Naive thymus-derived CD4-positive, alpha-beta T cell (primary cell): ENCODE measurements at regions of chr3 and their contacts with region 1.

Region 1: GRCh38 chr3:143972505-143973255 is 1.1 kb downstream of the DIPK2A start:
- DNase-seq: peak in 8 of 9 donors; percentile 29 to 78 (median 61)
- ATAC-seq: peak; percentile 14
- H3K4me3 ChIP-seq: peak overlapping the region; percentile 61
- H3K4me3 Mint-ChIP-seq: peak overlapping the region; percentile 91 to 100 (median 97)
- H3K27ac ChIP-seq: peak overlapping the region; percentile 84
- H3K27ac Mint-ChIP-seq: peak overlapping the region; percentile 87 to 99 (median 97)
- H3K4me1 ChIP-seq: peaks cover 10 to 14% of the 10 kb centered on the region in 2 donors
- H3K4me1 Mint-ChIP-seq: peaks cover 25 to 46% (median 33%) of the 10 kb centered on the region in 7 donors
- H3K27me3 ChIP-seq: no peaks in the 10 kb centered on the region
- H3K27me3 Mint-ChIP-seq: peaks cover 0 to 22% (median 0%) of the 10 kb centered on the region in 5 donors

Region 2: DNA sequence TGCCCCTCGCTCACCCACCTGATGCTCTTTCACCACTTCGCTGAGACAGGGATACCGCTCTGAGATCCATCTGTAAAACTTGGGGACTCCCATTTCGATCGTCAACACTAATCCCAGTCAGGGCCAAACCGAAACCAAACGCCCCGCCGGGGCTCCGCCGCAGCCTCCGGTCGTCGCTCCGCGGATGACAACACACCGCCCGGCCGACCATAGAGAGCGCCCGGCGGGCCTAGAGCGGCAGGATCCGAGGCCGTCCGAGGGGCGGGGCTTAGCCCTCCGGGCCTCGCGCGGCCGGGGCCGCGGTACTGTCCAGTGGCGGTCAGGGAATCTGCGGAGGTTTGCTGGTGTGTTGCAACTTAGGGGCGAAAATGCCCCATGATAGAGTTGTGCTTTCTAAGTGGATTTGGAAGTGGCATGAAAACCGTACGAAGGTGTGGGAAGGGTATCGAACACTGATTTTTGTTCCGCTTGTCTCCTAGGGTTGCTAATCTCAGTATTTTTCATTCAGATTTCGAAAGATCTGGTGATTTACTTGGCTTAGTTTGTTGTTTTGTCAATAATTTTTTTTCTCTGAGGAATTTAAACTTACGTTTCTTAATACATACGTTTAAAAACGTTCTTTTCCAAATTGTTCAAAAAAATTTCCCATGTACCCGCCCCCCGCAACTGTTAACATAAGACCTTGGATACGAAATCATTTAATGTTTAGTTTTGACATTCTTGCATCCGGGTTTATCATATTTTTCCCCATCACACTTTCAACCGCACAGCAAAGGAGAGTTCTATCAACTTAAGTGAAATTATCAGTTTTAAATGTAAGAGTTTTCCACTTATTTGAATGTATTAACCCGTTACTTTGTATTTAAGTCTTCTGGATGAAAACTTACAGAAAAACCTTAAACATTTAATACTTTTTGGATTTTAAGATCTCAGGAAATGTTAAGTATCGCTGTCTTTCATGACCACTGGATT is 1524.5 kb before region 1 on chr3 and contains the start of gene XRN1:
- CTCF ChIA-PET with region 1: no interaction called
- POLR2A ChIA-PET with region 1: no interaction called
- intact Hi-C with region 1: loop called (anchors 2 kb)
- DNase-seq: peak; percentile 90 to 97 (median 94)
- ATAC-seq: peak; percentile 99
- H3K4me3 ChIP-seq: peak within 1 kb of the TSS; percentile 78
- H3K4me3 Mint-ChIP-seq: peak within 1 kb of the TSS; percentile 89 to 100 (median 98)
- H3K27ac ChIP-seq: peak within 1 kb of the TSS; percentile 99
- H3K27ac Mint-ChIP-seq: peak within 1 kb of the TSS; percentile 98 to 100 (median 99)
- H3K4me1 ChIP-seq: peaks cover 31% of the 10 kb centered on the region in 2 donors
- H3K4me1 Mint-ChIP-seq: peaks cover 26 to 55% (median 51%) of the 10 kb centered on the region in 7 donors
- H3K27me3 ChIP-seq: no peaks in the 10 kb centered on the region
- H3K27me3 Mint-ChIP-seq: no peaks in the 10 kb centered on the region
- total RNA-seq, gene XRN1: 86.1 to 123 (median 103) TPM

Region 3: GRCh38 chr3:142723968-142724681 is 1248.6 kb before region 1 on chr3 and contains the start of gene TRPC1:
- CTCF ChIA-PET with region 1: no interaction called
- POLR2A ChIA-PET with region 1: interaction called, 5 read pairs
- intact Hi-C with region 1: loop called (anchors 1 to 5 kb)
- DNase-seq: peak in 8 of 9 donors; percentile 58 to 83 (median 78)
- ATAC-seq: peak; percentile 97
- H3K4me3 ChIP-seq: peak within 1 kb of the TSS; percentile 76
- H3K4me3 Mint-ChIP-seq: peak within 1 kb of the TSS; percentile 80 to 92 (median 88)
- H3K27ac ChIP-seq: peak within 1 kb of the TSS; percentile 76
- H3K27ac Mint-ChIP-seq: peak within 1 kb of the TSS; percentile 31 to 94 (median 88)
- H3K4me1 ChIP-seq: peaks cover 0 to 4% of the 10 kb centered on the region in 2 donors
- H3K4me1 Mint-ChIP-seq: peaks cover 5 to 20% (median 11%) of the 10 kb centered on the region in 7 donors
- H3K27me3 ChIP-seq: peaks cover 0 to 2% of the 10 kb centered on the region in 2 donors
- H3K27me3 Mint-ChIP-seq: peaks cover 20 to 67% (median 22%) of the 10 kb centered on the region in 5 donors
- total RNA-seq, gene TRPC1: 1.5 to 7.6 (median 5.3) TPM

Region 4: DNA sequence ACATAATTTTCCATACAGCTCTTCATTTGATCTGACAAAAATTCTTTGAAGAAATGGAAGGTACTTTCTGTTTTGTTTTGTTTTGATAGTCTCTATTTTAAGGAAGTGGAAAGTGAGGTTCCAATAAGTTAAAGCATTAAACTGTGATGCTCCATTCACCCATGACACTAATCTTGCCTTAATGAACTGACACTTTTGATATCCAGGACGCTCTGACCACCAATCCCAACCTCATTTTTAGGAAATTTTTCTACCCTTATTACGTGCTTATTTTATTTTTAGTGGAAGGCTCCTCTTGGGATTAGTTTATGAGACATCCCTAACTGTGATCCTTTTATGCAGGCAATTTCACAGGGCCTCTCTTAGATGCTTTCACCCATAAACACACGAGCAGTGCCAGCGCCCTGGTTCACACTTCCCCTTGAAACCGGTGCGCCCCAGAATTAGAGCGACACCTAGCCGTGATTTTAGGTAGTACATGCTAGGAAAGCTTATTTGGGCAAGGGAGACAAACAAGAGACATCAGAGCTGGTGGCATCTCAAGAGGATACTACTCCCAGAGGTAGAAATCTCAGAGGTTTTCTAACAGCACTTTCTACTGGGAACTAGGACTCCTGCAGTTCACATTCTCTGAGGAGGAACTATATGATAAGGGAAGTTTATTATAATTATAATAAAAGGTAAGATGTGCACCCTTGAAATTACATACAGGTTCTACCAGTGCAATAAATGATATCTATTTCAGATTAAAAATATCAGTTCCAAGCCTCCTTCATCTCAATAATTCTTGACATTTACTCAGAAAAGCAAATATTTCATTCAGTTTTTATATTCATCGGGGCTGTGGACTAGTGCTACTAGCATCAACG is 298.3 kb before region 1 on chr3:
- CTCF ChIA-PET with region 1: no interaction called
- POLR2A ChIA-PET with region 1: no interaction called
- intact Hi-C with region 1: loop called in 1 of 2 experiments (anchors 1 kb)
- DNase-seq: peak; percentile 40 to 86 (median 73)
- ATAC-seq: peak; percentile 96
- H3K4me3 ChIP-seq: no peak overlapping the region
- H3K4me3 Mint-ChIP-seq: peak overlapping the region in 9 of 10 donors; percentile 7 to 73 (median 45)
- H3K27ac ChIP-seq: no peak overlapping the region
- H3K27ac Mint-ChIP-seq: peak overlapping the region in 6 of 9 donors; percentile 14 to 86 (median 57)
- H3K4me1 ChIP-seq: peaks cover 0 to 6% of the 10 kb centered on the region in 2 donors
- H3K4me1 Mint-ChIP-seq: peaks cover 7 to 17% (median 9%) of the 10 kb centered on the region in 7 donors
- H3K27me3 ChIP-seq: no peaks in the 10 kb centered on the region
- H3K27me3 Mint-ChIP-seq: no peaks in the 10 kb centered on the region

Region 5: DNA sequence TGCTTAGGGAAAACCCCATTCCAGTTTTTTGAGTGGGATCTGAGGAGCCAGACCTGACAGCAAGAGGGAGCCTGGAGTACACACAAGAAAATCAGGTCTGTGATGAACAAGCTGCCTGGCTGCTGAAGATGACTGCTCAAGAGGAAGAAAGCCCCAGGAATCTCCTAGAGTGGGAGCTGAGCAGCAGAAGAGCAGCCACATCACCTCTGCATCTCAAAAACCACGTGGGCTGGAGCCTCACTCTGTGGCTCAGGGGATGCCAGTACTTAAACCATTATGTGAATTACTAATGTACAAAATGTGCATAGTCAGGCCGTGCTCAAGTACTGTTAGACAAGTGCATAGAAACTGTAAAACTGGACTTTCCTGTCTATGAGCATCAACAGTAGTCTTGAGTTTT is 176.8 kb before region 1 on chr3:
- CTCF ChIA-PET with region 1: no interaction called
- POLR2A ChIA-PET with region 1: no interaction called
- intact Hi-C with region 1: no loop called
- DNase-seq: no peak
- ATAC-seq: no peak
- H3K4me3 ChIP-seq: no peak overlapping the region
- H3K4me3 Mint-ChIP-seq: no peak overlapping the region
- H3K27ac ChIP-seq: no peak overlapping the region
- H3K27ac Mint-ChIP-seq: no peak overlapping the region
- H3K4me1 ChIP-seq: no peaks in the 10 kb centered on the region
- H3K4me1 Mint-ChIP-seq: peaks cover 0 to 14% (median 0%) of the 10 kb centered on the region in 7 donors
- H3K27me3 ChIP-seq: no peaks in the 10 kb centered on the region
- H3K27me3 Mint-ChIP-seq: no peaks in the 10 kb centered on the region

Region 6: GRCh38 chr3:143825513-143825912 is 147.2 kb before region 1 on chr3:
- CTCF ChIA-PET with region 1: no interaction called
- POLR2A ChIA-PET with region 1: interaction called, 5 read pairs
- intact Hi-C with region 1: loop called (anchors 2 to 5 kb)
- DNase-seq: peak in 7 of 9 donors; percentile 4 to 56 (median 41)
- ATAC-seq: peak; percentile 85
- H3K4me3 ChIP-seq: no peak overlapping the region
- H3K4me3 Mint-ChIP-seq: peak overlapping the region in 8 of 10 donors; percentile 7 to 58 (median 30)
- H3K27ac ChIP-seq: no peak overlapping the region
- H3K27ac Mint-ChIP-seq: peak overlapping the region in 7 of 9 donors; percentile 23 to 73 (median 38)
- H3K4me1 ChIP-seq: peaks cover 10 to 22% of the 10 kb centered on the region in 2 donors
- H3K4me1 Mint-ChIP-seq: peaks cover 25 to 50% (median 30%) of the 10 kb centered on the region in 7 donors
- H3K27me3 ChIP-seq: no peaks in the 10 kb centered on the region
- H3K27me3 Mint-ChIP-seq: no peaks in the 10 kb centered on the region

Region 7: DNA sequence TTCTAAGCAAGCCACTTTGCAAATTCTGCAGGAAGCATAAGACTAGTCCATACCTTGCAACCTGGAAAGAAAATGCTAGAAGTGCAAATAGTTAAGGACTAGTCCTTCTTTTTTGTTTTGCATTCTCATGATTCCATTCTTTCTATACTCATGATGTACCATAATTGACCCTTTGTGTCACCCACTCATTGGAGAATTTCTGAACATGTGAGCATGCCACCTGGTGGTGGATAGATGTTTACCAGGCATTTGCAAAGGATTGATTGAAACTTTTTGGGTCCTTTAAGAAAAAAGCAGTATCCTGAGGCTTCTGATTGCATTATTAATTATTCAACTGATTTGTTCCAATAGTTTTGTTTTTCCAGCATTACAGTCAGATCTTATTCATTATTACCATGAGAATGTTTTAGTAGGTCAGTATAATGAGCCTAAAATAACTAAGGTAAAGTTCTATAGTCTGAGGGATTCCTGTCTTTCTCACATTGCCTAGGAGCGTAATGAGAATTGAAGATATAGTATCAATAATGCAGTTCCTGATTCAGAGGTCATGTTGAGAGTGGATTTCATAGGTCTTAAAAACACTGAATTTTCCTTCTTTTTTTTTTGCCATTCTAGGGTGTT is 21.2 kb before region 1 on chr3:
- CTCF ChIA-PET with region 1: interaction called, 5 read pairs
- POLR2A ChIA-PET with region 1: interaction called, 4 read pairs
- intact Hi-C with region 1: loop called in 1 of 2 experiments (anchors 1 kb)
- DNase-seq: peak in 6 of 9 donors; percentile 2 to 40 (median 30)
- ATAC-seq: peak; percentile 60
- H3K4me3 ChIP-seq: no peak overlapping the region
- H3K4me3 Mint-ChIP-seq: no peak overlapping the region
- H3K27ac ChIP-seq: no peak overlapping the region
- H3K27ac Mint-ChIP-seq: no peak overlapping the region
- H3K4me1 ChIP-seq: no peaks in the 10 kb centered on the region
- H3K4me1 Mint-ChIP-seq: peaks cover 0 to 4% (median 2%) of the 10 kb centered on the region in 7 donors
- H3K27me3 ChIP-seq: no peaks in the 10 kb centered on the region
- H3K27me3 Mint-ChIP-seq: peaks cover 5 to 38% (median 15%) of the 10 kb centered on the region in 5 donors